ENCODE measurements at regions of chr9 and their contacts with region 1.

Region 1: DNA sequence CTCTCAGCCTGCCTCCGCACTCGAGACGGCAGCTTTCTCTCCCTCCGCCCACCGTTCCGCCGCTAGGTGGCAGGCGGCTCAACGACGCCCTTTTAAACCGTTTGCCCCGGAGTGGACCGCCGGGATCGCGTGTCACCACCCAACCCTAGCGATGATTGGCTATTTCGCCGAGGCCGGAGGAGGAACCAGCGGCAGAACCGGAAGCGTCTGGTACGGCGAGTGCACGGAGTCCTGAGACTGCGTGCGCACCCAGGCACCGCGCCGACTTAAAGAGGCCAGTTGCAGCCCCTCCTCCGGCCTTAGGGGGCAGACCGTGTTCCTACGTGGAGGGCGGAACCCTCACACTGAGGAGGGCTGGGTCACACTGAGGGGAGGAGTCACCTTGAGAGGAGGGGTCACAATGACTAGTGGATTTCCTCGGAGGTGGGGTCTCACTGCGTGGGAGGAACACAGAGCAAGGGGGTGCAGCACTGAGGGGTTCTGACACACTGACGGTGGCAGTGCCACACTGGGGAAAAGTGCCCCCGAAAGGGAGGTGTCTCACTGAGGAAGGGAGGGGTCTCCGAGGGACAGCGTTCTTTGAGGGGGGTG is 980 bp upstream of the TESK1 start:
- DNase-seq: peak; percentile 98
- ATAC-seq: peak; percentile 88
- H3K4me3 ChIP-seq: peak overlapping the region; percentile 69
- H3K27ac ChIP-seq: peak overlapping the region; percentile 51
- H3K4me1 ChIP-seq: peaks cover 16% of the 10 kb centered on the region
- H3K27me3 ChIP-seq: no peaks in the 10 kb centered on the region
- CTCF ChIP-seq: peak; percentile 80

Region 2: GRCh38 chr9:35646533-35647265 is 42.6 kb after region 1 on chr9:
- CTCF ChIA-PET with region 1: no interaction called
- POLR2A ChIA-PET with region 1: no interaction called
- intact Hi-C with region 1: loop called (anchors 1 kb)
- DNase-seq: peak; percentile 87
- ATAC-seq: peak; percentile 97
- H3K4me3 ChIP-seq: peak overlapping the region; percentile 90
- H3K27ac ChIP-seq: no peak overlapping the region
- H3K4me1 ChIP-seq: peaks cover 5% of the 10 kb centered on the region
- H3K27me3 ChIP-seq: no peaks in the 10 kb centered on the region
- CTCF ChIP-seq: peak; percentile 70

Region 3: GRCh38 chr9:35696525-35697215 is 92.6 kb after region 1 on chr9:
- CTCF ChIA-PET with region 1: no interaction called
- POLR2A ChIA-PET with region 1: no interaction called
- intact Hi-C with region 1: no loop called
- DNase-seq: peak; percentile 49
- ATAC-seq: peak; percentile 67
- H3K4me3 ChIP-seq: no peak overlapping the region
- H3K27ac ChIP-seq: peak overlapping the region; percentile 63
- H3K4me1 ChIP-seq: peaks cover 12% of the 10 kb centered on the region
- H3K27me3 ChIP-seq: no peaks in the 10 kb centered on the region
- CTCF ChIP-seq: peak; percentile 73

Region 4: GRCh38 chr9:35732122-35732799 is 128.2 kb after region 1 on chr9 and contains the starts of genes CREB3 and TLN1:
- CTCF ChIA-PET with region 1: no interaction called
- POLR2A ChIA-PET with region 1: no interaction called
- intact Hi-C with region 1: loop called (anchors 1 kb)
- DNase-seq: peak; percentile 96
- ATAC-seq: peak; percentile 74
- H3K4me3 ChIP-seq: peak within 1 kb of the TSS; percentile 90
- H3K27ac ChIP-seq: peak within 1 kb of the TSS; percentile 84
- H3K4me1 ChIP-seq: peaks cover 53% of the 10 kb centered on the region
- H3K27me3 ChIP-seq: no peaks in the 10 kb centered on the region
- CTCF ChIP-seq: peak; percentile 21; the same call in 1 of the 2 replicates
- total RNA-seq, gene CREB3: 34.8 and 47.1 TPM in 2 replicates
- total RNA-seq, gene TLN1: 118 and 153 TPM in 2 replicates